Dendritic cell treated with granulocyte-macrophage colony-stimulating factor and Interleukin-4, amounts not matched to agents 40 ng/mL and 50 ng/mL, for 4 days (primary cell): ENCODE measurements at regions of chr2 and their contacts with region 1.

Region 1: DNA sequence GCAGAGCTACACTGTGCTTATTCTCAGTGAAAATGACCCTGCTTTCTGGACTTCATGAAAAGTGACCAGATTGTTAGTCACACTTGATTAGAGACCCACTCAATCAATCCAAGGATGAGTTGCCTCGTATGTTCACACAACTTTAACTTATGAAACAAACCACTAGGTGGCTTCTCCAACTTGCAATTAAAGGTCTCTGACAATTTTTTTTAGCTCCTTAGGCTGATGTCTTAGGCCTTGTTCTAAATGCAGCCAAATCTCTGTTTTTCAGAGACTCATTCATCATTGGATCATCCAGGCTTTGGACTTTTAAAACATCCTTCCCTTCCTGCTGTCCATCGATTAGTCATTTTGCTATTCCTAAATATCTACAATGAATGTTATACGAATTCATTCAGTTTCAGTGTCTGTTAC is 63.4 kb downstream of the MREG start:
- H3K4me3 Mint-ChIP-seq: no peak overlapping the region
- H3K27ac Mint-ChIP-seq: no peak overlapping the region
- H3K4me1 Mint-ChIP-seq: peaks cover 10% of the 10 kb centered on the region
- H3K27me3 Mint-ChIP-seq: no peaks in the 10 kb centered on the region

Region 2: DNA sequence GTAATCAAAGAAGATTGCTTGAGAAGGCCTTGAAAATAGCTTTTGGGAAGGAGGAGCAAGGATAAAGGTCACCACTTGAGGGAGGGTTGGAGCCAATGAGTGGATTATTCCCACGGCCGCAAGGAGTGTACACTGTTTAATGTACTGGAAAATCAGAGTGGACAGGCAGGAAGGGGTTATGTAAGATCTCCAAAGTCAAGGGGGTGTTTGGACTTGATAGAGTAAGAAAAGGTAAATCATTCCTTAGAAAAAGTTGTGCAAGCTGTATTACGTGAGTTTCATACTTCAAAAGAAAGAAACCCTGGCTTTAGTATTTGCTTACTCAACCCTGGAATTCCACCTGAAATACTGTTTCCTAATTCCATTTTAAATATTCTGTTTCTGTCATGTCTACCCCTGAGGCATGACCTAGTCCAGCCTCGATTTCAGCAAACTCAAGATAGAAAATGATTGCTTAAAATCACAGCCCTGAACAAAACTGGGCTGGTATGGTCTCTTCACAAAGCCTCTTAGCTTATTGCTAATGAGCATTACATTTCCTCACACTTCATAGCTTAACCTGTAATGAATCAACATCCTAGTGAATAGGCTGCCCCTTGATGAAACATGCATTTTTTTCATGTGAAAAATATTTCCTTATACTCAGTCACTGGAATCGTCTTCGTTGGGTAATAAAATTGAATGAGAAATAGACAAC is 62.3 kb after region 1 on chr2:
- intact Hi-C with region 1: loop called (anchors 1 kb)
- H3K4me3 Mint-ChIP-seq: peak overlapping the region; percentile 85
- H3K27ac Mint-ChIP-seq: peak overlapping the region; percentile 74
- H3K4me1 Mint-ChIP-seq: peaks cover 19% of the 10 kb centered on the region
- H3K27me3 Mint-ChIP-seq: peaks cover 4% of the 10 kb centered on the region

Region 3: DNA sequence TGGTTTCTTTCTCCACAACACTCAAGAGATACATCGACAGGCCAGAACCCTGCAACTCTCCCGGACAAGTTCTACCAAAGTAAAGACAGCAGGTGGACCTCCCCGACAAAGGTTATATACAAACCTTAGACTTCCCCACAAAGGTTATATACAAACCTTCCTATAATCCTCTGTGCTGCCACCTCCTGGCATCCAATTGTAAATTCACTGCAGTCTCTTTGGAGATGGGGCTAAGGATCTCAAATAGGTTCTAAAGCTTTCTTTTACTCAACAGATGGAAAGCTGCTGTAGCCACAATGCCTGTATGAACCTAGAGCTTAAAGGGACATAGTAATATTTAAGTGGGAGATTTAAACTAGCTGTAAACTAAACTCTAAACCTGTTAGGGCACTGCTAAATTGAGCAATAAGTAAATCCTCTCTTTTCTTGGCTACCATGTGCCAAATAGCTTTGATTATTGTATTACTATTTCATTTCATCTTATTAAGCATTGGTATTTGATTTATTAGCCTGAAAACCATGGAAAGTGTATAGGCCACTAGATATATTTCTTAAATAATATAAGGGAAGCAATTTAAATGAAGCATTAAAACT is 73.2 kb after region 1 on chr2:
- intact Hi-C with region 1: loop called (anchors 1 kb)
- H3K4me3 Mint-ChIP-seq: no peak overlapping the region
- H3K27ac Mint-ChIP-seq: no peak overlapping the region
- H3K4me1 Mint-ChIP-seq: no peaks in the 10 kb centered on the region
- H3K27me3 Mint-ChIP-seq: no peaks in the 10 kb centered on the region